Sigmoid colon (tissue), 7 donors: ENCODE measurements at regions of chr15 and their contacts with region 1.

Region 1: GRCh38 chr15:92881802-92882696 is 18.1 kb upstream of the CHD2 start:
- DNase-seq: peak; percentile 100
- H3K4me3 ChIP-seq: peak overlapping the region; percentile 9 to 99 (median 97)
- H3K27ac ChIP-seq: peak overlapping the region; percentile 99 to 100 (median 100)
- H3K4me1 ChIP-seq: peaks cover 0 to 33% (median 27%) of the 10 kb centered on the region in 4 donors
- H3K27me3 ChIP-seq: no peaks in the 10 kb centered on the region
- CTCF ChIP-seq: no peak
- EP300 ChIP-seq: no peak
- POLR2A ChIP-seq: peak; percentile 94 to 95

Region 2: GRCh38 chr15:92831655-92832328 is 50.3 kb before region 1 on chr15:
- intact Hi-C with region 1: loop called (anchors 1 kb)
- DNase-seq: peak; percentile 98
- H3K4me3 ChIP-seq: peak overlapping the region; percentile 17 to 38 (median 30)
- H3K27ac ChIP-seq: peak overlapping the region; percentile 85 to 93 (median 90)
- H3K4me1 ChIP-seq: peaks cover 4 to 41% (median 39%) of the 10 kb centered on the region in 4 donors
- H3K27me3 ChIP-seq: no peaks in the 10 kb centered on the region
- CTCF ChIP-seq: no peak
- EP300 ChIP-seq: peak in 1 of 4 donors; percentile 57
- POLR2A ChIP-seq: peak; percentile 70 to 74

Region 3: GRCh38 chr15:92903941-92904831 is 22.1 kb after region 1 on chr15:
- intact Hi-C with region 1: loop called (anchors 2 kb)
- DNase-seq: peak; percentile 100
- H3K4me3 ChIP-seq: peak overlapping the region; percentile 42 to 60 (median 57)
- H3K27ac ChIP-seq: peak overlapping the region; percentile 91 to 96 (median 94)
- H3K4me1 ChIP-seq: peaks cover 0 to 71% (median 48%) of the 10 kb centered on the region in 4 donors
- H3K27me3 ChIP-seq: no peaks in the 10 kb centered on the region
- CTCF ChIP-seq: no peak
- EP300 ChIP-seq: peak; percentile 82 to 98 (median 91)
- POLR2A ChIP-seq: peak; percentile 90 to 95

Region 4: DNA sequence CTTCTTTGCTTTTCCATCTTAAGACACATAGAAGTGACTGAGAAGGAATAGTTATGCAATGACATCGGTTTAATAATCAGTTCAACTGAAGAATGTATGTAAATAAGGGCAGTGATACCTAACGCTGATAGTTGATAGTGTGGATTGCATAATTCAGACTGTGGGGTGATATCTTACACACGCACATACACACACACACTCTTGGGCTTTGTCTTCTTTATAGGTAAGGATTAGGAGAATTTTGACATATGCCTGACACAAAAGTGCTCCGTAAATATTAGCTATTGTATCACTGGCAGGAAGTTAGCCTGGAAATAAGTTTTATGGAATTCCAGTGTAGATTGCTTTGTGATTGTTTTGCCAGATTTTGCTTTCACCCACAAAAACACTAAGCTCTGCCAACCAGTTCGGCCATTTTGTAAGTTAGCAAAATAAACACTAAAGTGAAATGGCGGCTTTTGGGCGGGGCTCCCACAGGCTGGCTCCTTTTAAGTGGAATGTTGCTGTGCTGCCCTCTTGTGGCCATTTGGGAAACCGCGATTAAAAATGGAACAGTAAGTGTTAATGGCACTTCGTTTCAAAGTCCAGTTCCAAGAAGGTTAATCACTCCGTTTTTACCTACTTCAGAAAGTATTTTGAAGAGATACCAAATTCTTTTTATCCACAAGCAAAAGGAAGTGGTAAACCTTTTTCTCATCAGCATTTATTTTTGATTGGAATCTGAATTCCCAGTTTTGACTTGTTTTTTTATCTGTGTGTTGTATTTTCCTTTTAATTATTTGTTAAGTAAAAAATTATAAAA is 35.8 kb after region 1 on chr15:
- intact Hi-C with region 1: loop called (anchors 5 kb)
- DNase-seq: peak; percentile 98
- H3K4me3 ChIP-seq: peak overlapping the region; percentile 3 to 34 (median 17)
- H3K27ac ChIP-seq: peak overlapping the region; percentile 76 to 95 (median 92)
- H3K4me1 ChIP-seq: peaks cover 0 to 97% (median 86%) of the 10 kb centered on the region in 4 donors
- H3K27me3 ChIP-seq: no peaks in the 10 kb centered on the region
- CTCF ChIP-seq: peak; percentile 83 to 95 (median 90)
- EP300 ChIP-seq: no peak
- POLR2A ChIP-seq: no peak

Region 5: GRCh38 chr15:93102211-93102610 is 220.2 kb after region 1 on chr15:
- intact Hi-C with region 1: no loop called
- DNase-seq: no peak
- H3K4me3 ChIP-seq: no peak overlapping the region
- H3K27ac ChIP-seq: no peak overlapping the region
- H3K4me1 ChIP-seq: no peaks in the 10 kb centered on the region
- H3K27me3 ChIP-seq: no peaks in the 10 kb centered on the region
- CTCF ChIP-seq: no peak
- EP300 ChIP-seq: no peak
- POLR2A ChIP-seq: no peak